ENCODE measurements at regions of chr1 and their contacts with region 1.

Region 1: DNA sequence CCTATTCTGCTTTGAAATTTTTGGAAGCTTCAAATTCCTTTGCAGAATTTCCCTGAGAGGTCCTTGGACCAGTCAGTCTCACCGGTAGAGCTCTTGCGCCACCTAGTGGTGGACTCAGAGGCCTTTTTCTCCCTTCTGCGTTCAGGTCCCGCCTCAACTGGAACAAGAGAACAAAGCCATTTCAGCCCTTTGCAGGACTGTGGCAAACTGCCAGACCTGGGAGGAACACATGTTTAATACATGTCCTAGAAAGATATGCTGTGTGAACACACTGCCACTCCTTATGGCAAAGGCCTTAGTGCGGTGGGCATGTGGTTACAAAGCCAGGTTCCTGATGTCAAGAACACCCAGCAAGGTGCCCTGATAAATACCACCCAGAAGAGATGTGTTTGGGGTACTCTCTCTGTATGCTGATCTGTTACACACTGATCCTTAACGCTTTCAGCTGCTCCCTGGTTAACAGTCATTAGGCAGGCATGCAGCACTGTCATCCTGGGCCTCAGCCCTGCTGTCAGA is 82.2 kb upstream of the SSX2IP start:
- DNase-seq: peak; percentile 85
- H3K4me3 Mint-ChIP-seq: no peak overlapping the region
- H3K27ac Mint-ChIP-seq: no peak overlapping the region
- H3K4me1 Mint-ChIP-seq: peaks cover 5% of the 10 kb centered on the region
- H3K27me3 Mint-ChIP-seq: no peaks in the 10 kb centered on the region
- CTCF ChIP-seq: peak; percentile 79

Region 2: GRCh38 chr1:84143796-84144565 is 628.5 kb before region 1 on chr1 and contains the start of gene PRKACB:
- CTCF ChIA-PET with region 1: interaction called, 10 read pairs
- POLR2A ChIA-PET with region 1: no interaction called
- intact Hi-C with region 1: loop called (anchors 1 kb)
- DNase-seq: peak; percentile 9
- H3K4me3 Mint-ChIP-seq: no peak within 1 kb of the TSS
- H3K27ac Mint-ChIP-seq: no peak within 1 kb of the TSS
- H3K4me1 Mint-ChIP-seq: no peaks in the 10 kb centered on the region
- H3K27me3 Mint-ChIP-seq: no peaks in the 10 kb centered on the region
- CTCF ChIP-seq: no peak
- total RNA-seq, gene PRKACB: 12.8 and 14.8 TPM in 2 replicates

Region 3: GRCh38 chr1:84442256-84442655 is 330.2 kb before region 1 on chr1:
- CTCF ChIA-PET with region 1: interaction called, 16 read pairs
- POLR2A ChIA-PET with region 1: no interaction called
- intact Hi-C with region 1: loop called (anchors 2 kb)
- DNase-seq: peak; percentile 87
- H3K4me3 Mint-ChIP-seq: no peak overlapping the region
- H3K27ac Mint-ChIP-seq: no peak overlapping the region
- H3K4me1 Mint-ChIP-seq: no peaks in the 10 kb centered on the region
- H3K27me3 Mint-ChIP-seq: no peaks in the 10 kb centered on the region
- CTCF ChIP-seq: peak; percentile 39

Region 4: DNA sequence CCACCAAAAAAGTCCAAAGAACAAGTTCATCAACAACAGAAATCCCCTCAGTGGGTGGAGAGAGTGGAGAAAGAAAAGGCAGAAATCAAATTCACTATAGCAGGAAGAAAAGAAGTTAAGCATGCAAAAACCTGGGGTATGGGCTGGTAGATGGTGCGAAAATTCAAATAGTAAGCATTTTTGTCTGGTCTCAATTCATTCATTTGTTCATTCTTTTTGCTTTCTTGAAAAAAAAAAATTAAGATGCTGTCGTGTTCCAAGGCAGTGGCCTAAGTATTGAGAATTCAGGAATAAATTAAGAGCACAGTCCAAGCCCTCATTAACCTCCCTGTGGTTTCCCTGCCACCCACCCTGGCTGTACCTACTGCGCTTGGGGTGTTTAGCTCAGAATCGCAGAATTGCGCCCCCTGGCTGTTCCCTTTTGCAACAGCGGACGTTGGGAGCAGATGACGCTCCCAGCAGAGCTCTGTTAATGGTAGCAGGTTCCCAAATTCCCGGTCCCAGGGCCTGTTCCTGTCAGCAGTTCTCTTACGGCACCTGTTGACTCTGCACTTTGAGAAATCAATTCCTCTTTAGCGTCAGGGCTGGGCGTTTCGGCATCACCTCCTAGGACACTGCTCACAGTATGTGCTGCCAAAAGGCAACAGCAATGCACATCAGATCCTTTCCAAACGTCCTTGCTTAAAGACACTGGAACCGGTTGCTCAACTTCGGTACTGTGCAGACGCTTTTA is 48.2 kb before region 1 on chr1:
- CTCF ChIA-PET with region 1: no interaction called
- POLR2A ChIA-PET with region 1: no interaction called
- intact Hi-C with region 1: no loop called
- DNase-seq: peak; percentile 13
- H3K4me3 Mint-ChIP-seq: no peak overlapping the region
- H3K27ac Mint-ChIP-seq: no peak overlapping the region
- H3K4me1 Mint-ChIP-seq: peaks cover 20% of the 10 kb centered on the region
- H3K27me3 Mint-ChIP-seq: no peaks in the 10 kb centered on the region
- CTCF ChIP-seq: peak; percentile 25

Region 5: DNA sequence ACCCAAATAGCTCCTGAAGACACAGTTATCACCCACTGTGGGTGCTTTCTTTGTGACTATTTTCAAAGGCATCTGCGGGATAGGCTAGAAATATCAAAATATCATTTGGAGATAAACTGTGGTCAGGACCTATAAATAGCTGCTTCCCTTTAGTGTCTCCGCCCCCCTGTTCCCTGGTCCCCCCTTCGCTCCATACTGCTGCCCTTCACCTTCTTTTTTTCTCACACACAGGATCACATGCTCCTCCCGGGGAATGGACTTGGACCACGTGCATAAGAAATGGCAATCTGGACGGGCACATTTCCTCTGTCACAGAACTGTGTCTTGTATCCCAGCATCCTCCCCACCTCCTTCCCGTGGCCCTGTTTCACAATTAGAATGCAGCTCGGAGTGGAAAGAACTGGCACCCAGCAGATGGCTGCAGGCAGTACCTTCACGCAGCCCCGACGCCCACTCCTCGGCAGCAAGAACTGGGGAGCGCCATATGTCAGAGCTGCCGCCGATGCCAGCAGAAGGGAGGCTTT is 13.5 kb before region 1 on chr1:
- CTCF ChIA-PET with region 1: interaction called, 43 read pairs
- POLR2A ChIA-PET with region 1: interaction called, 4 read pairs
- intact Hi-C with region 1: no loop called
- DNase-seq: peak; percentile 14
- H3K4me3 Mint-ChIP-seq: no peak overlapping the region
- H3K27ac Mint-ChIP-seq: no peak overlapping the region
- H3K4me1 Mint-ChIP-seq: peaks cover 6% of the 10 kb centered on the region
- H3K27me3 Mint-ChIP-seq: no peaks in the 10 kb centered on the region
- CTCF ChIP-seq: no peak

Region 6: DNA sequence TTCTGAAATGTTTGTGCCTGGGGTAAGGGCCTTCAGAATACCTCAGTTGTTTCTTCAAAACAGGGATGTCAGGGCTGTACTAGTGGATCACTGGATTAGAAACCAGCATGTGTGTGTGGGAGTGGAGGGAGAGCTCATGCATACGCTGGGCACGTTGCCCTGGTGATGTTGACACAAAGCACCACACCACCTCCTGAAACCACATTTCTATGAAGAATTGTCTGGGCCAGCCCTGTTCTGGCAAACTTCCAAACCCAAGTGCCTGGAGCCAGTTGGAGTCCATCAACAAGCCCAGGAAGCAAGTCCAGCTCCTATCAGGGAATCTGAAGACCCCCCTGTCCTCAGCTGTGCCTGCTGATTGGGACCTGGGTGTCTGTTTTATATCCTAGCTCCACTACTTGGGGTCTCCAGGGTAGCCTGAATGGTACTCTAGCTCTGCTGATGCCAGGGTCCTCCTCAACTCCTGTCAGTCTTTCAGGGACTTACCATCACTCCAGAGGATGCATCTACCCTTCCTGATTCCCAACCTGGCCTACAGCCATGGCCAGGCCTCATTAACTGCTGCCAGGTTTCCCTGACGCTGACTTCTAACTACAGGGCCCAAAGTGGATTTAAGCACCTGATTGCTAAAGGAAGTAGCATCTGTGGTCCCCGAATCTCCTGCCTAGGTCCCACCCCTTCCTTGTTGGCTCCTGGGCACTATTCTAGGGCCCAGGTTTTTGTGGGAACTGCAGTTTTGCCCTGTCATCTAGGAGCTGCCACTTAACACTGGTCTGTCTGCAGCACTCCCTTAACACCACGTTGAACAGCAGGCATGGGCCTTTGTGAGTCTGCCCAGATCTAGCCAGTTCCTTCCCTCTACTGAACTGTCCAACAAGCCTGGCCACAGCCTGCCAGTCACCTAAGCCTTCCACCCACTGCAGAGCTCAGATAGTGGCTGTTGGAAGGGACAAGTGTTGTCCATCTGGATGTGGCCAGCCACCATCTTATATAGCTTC is 75.1 kb after region 1 on chr1:
- CTCF ChIA-PET with region 1: interaction called, 10 read pairs
- POLR2A ChIA-PET with region 1: no interaction called
- intact Hi-C with region 1: no loop called
- DNase-seq: peak; percentile 99
- H3K4me3 Mint-ChIP-seq: peak overlapping the region; percentile 29
- H3K27ac Mint-ChIP-seq: peak overlapping the region; percentile 84
- H3K4me1 Mint-ChIP-seq: peaks cover 44% of the 10 kb centered on the region
- H3K27me3 Mint-ChIP-seq: no peaks in the 10 kb centered on the region
- CTCF ChIP-seq: no peak

Region 7: DNA sequence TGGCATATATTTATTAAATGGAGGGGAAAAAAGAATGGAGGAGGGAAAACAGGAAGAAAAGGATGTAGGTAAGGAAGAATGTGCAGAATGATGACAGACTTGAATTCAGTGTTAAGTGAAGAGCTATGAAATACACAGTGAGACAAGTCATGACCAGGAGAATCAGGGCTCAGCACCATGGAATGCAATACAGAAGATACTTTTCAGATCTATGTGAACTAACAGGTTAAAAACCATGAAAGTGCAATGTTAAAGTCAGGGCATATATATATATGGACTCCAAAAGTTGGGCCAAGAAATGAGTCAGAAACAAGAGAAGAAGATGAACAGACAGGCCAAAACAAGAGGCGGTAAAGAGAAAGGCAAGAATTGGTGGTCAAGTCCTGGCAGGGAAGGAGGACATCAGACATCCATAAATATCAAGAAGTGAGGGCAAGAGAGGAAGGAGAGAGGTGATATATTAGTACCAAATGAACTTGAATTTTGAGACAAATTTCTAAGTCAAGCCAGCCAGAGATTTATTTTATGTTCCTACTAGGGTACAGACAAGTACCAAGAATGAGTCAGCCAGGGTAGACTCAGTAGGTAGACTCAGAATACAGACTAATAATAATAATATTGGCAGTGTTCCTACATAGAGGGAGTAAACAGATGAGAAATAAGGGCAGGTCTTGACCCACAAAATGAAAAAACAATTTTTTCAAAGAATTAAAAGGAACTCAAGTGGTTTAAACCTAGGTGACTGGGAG is 315.3 kb after region 1 on chr1:
- CTCF ChIA-PET with region 1: no interaction called
- POLR2A ChIA-PET with region 1: no interaction called
- intact Hi-C with region 1: no loop called
- DNase-seq: peak; percentile 12
- H3K4me3 Mint-ChIP-seq: no peak overlapping the region
- H3K27ac Mint-ChIP-seq: no peak overlapping the region
- H3K4me1 Mint-ChIP-seq: peaks cover 5% of the 10 kb centered on the region
- H3K27me3 Mint-ChIP-seq: no peaks in the 10 kb centered on the region
- CTCF ChIP-seq: no peak

Region 8: DNA sequence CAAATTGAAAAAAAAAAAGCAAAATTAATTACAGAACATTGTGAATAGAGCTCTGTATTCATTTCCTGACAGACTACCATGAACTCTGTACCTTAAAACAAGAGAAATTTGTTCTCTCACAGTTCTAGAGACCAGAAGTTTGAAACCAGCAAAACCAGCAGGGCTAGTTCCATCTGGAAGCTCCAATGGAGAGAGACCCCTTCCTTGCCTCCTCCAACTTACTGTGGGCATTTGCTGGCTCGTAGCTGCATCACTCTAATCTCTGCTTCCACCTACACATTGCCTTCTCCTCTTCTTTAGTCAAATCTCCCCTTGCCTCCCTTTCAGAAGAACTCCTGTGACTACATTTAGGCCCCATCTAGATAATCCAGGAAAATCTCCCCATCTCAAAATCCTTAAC is 371.9 kb after region 1 on chr1:
- CTCF ChIA-PET with region 1: no interaction called
- POLR2A ChIA-PET with region 1: no interaction called
- intact Hi-C with region 1: no loop called
- DNase-seq: no peak
- H3K4me3 Mint-ChIP-seq: no peak overlapping the region
- H3K27ac Mint-ChIP-seq: no peak overlapping the region
- H3K4me1 Mint-ChIP-seq: no peaks in the 10 kb centered on the region
- H3K27me3 Mint-ChIP-seq: no peaks in the 10 kb centered on the region
- CTCF ChIP-seq: no peak

Measured in MCF 10A (cell line).